OCI-LY7 (cell line): ENCODE measurements at regions of chr7 and their contacts with region 1.

Region 1: GRCh38 chr7:135965602-135966001 is 11.6 kb downstream of the MTPN start:
- DNase-seq: no peak
- H3K4me3 ChIP-seq: peak overlapping the region; percentile 55
- H3K27ac ChIP-seq: peak overlapping the region; percentile 88
- H3K4me1 ChIP-seq: peaks cover 97% of the 10 kb centered on the region
- CTCF ChIP-seq: no peak

Region 2: GRCh38 chr7:135349746-135350379 is 615.7 kb before region 1 on chr7:
- CTCF ChIA-PET with region 1: no interaction called
- POLR2A ChIA-PET with region 1: no interaction called
- intact Hi-C with region 1: no loop called
- DNase-seq: no peak
- H3K4me3 ChIP-seq: no peak overlapping the region
- H3K27ac ChIP-seq: no peak overlapping the region
- H3K4me1 ChIP-seq: no peaks in the 10 kb centered on the region
- CTCF ChIP-seq: no peak

Region 3: DNA sequence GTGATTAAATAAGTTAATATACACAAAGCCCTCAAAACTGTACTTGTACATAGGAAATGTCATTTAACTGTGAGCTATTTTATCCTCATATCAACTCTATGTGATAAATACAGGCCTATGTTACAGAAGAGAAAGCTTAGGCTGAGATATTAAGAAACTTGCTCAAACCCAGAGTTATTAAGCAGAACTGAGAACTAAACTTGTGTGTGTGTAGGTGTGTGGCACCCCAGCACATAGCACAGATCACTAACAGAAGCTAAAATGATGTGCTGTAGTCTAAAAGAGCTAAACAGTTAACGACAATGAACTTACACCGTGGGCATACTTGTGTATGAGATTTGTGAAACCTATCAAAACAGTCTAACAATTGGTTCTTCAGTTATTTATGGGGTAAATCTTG is 23.0 kb before region 1 on chr7:
- CTCF ChIA-PET with region 1: no interaction called
- POLR2A ChIA-PET with region 1: interaction called, 10 read pairs
- intact Hi-C with region 1: no loop called
- DNase-seq: no peak
- H3K4me3 ChIP-seq: no peak overlapping the region
- H3K27ac ChIP-seq: no peak overlapping the region
- H3K4me1 ChIP-seq: peaks cover 32% of the 10 kb centered on the region
- CTCF ChIP-seq: no peak

Region 4: DNA sequence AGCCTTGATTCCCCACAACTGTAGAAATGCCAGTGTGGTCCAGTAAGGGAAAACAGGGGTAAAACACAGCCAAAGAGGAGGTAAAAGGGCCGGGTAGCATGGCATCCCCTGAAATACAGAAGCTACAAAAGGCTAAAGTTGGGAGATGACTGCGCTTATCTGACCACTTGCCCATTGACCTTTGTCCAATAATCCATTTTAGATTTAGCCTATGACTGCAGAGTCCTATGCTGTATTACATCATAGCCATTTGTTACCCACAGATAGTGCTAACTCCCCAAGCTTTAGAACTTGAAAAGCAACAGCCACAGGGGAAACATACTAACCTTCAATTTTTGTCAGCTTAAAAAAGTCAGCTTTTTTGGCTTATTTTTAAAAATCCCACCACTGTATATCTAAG is 14.6 kb before region 1 on chr7:
- CTCF ChIA-PET with region 1: no interaction called
- POLR2A ChIA-PET with region 1: interaction called, 30 read pairs
- intact Hi-C with region 1: no loop called
- DNase-seq: no peak
- H3K4me3 ChIP-seq: no peak overlapping the region
- H3K27ac ChIP-seq: no peak overlapping the region
- H3K4me1 ChIP-seq: peaks cover 4% of the 10 kb centered on the region
- CTCF ChIP-seq: no peak

Region 5: DNA sequence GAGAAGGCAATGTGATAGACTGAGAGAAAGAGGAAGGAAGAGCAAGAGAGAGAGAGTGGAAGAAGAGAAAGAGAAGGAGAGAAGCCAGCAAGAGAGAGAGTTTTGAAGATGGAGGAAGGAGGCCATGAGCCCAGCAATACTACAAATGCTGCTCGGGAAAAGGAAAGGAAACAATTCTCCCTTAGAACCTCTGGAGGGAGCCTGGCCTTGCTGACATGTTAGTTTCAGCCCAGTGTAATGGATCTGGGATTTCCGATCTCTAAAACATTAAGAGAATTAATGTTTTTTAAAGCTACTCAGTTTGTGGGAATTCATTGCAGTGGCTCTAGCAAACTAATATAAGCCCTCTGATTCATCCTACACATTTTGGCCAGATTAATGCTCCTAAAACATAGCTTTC is 218.4 kb after region 1 on chr7:
- CTCF ChIA-PET with region 1: no interaction called
- POLR2A ChIA-PET with region 1: no interaction called
- intact Hi-C with region 1: no loop called
- DNase-seq: no peak
- H3K4me3 ChIP-seq: no peak overlapping the region
- H3K27ac ChIP-seq: no peak overlapping the region
- H3K4me1 ChIP-seq: no peaks in the 10 kb centered on the region
- CTCF ChIP-seq: no peak